Activated CD4-positive, alpha-beta T cell treated with anti-CD3 and anti-CD28 coated beads for 36 hours (primary cell): ENCODE measurements at regions of chr15 and their contacts with region 1.

Region 1: GRCh38 chr15:73991726-73992593 is at the start of gene STOML1:
- DNase-seq: peak; percentile 96
- ATAC-seq: peak; percentile 74
- H3K4me3 Mint-ChIP-seq: peak within 1 kb of the TSS; percentile 74
- H3K27ac Mint-ChIP-seq: peak within 1 kb of the TSS; percentile 86
- H3K4me1 Mint-ChIP-seq: peaks cover 42% of the 10 kb centered on the region
- H3K27me3 Mint-ChIP-seq: no peaks in the 10 kb centered on the region
- total RNA-seq, gene STOML1: 6.3 to 7.1 TPM

Region 2: GRCh38 chr15:72272213-72273002 is 1719.6 kb before region 1 on chr15 and contains the start of gene PARP6:
- CTCF ChIA-PET with region 1: no interaction called
- POLR2A ChIA-PET with region 1: no interaction called
- intact Hi-C with region 1: loop called in 1 of 2 experiments (anchors 10 kb)
- DNase-seq: peak; percentile 99
- ATAC-seq: peak; percentile 98
- H3K4me3 Mint-ChIP-seq: peak within 1 kb of the TSS; percentile 80
- H3K27ac Mint-ChIP-seq: peak within 1 kb of the TSS; percentile 92
- H3K4me1 Mint-ChIP-seq: peaks cover 35% of the 10 kb centered on the region
- H3K27me3 Mint-ChIP-seq: no peaks in the 10 kb centered on the region
- total RNA-seq, gene PARP6: 41.4 to 58.2 TPM

Region 3: GRCh38 chr15:73927476-73928240 is 64.3 kb before region 1 on chr15:
- CTCF ChIA-PET with region 1: interaction called, 4 read pairs
- POLR2A ChIA-PET with region 1: no interaction called
- intact Hi-C with region 1: loop called in 1 of 2 experiments (anchors 2 kb)
- DNase-seq: peak; percentile 87
- ATAC-seq: peak; percentile 77
- H3K4me3 Mint-ChIP-seq: peak overlapping the region; percentile 72
- H3K27ac Mint-ChIP-seq: peak overlapping the region; percentile 42
- H3K4me1 Mint-ChIP-seq: peaks cover 35% of the 10 kb centered on the region
- H3K27me3 Mint-ChIP-seq: no peaks in the 10 kb centered on the region

Region 4: GRCh38 chr15:73972984-73973682 is 18.8 kb before region 1 on chr15:
- CTCF ChIA-PET with region 1: interaction called, 57 read pairs
- POLR2A ChIA-PET with region 1: interaction called, 3 read pairs
- intact Hi-C with region 1: loop called in 1 of 2 experiments (anchors 1 kb)
- DNase-seq: peak; percentile 91
- ATAC-seq: peak; percentile 88
- H3K4me3 Mint-ChIP-seq: peak overlapping the region; percentile 8
- H3K27ac Mint-ChIP-seq: no peak overlapping the region
- H3K4me1 Mint-ChIP-seq: peaks cover 27% of the 10 kb centered on the region
- H3K27me3 Mint-ChIP-seq: peaks cover 12% of the 10 kb centered on the region

Region 5: GRCh38 chr15:74053941-74054529 is 62.1 kb after region 1 on chr15:
- CTCF ChIA-PET with region 1: interaction called, 19 read pairs
- POLR2A ChIA-PET with region 1: no interaction called
- intact Hi-C with region 1: no loop called
- DNase-seq: peak; percentile 88
- ATAC-seq: peak; percentile 99
- H3K4me3 Mint-ChIP-seq: no peak overlapping the region
- H3K27ac Mint-ChIP-seq: no peak overlapping the region
- H3K4me1 Mint-ChIP-seq: peaks cover 8% of the 10 kb centered on the region
- H3K27me3 Mint-ChIP-seq: no peaks in the 10 kb centered on the region

Region 6: GRCh38 chr15:74695597-74696397 is 703.8 kb after region 1 on chr15 and contains the start of gene EDC3:
- CTCF ChIA-PET with region 1: no interaction called
- POLR2A ChIA-PET with region 1: no interaction called
- intact Hi-C with region 1: loop called in 1 of 2 experiments (anchors 10 kb)
- DNase-seq: peak; percentile 92
- ATAC-seq: peak; percentile 91
- H3K4me3 Mint-ChIP-seq: peak within 1 kb of the TSS; percentile 98
- H3K27ac Mint-ChIP-seq: peak within 1 kb of the TSS; percentile 99
- H3K4me1 Mint-ChIP-seq: peaks cover 27% of the 10 kb centered on the region
- H3K27me3 Mint-ChIP-seq: no peaks in the 10 kb centered on the region
- total RNA-seq, gene EDC3: 44.7 to 45.0 TPM

Region 7: DNA sequence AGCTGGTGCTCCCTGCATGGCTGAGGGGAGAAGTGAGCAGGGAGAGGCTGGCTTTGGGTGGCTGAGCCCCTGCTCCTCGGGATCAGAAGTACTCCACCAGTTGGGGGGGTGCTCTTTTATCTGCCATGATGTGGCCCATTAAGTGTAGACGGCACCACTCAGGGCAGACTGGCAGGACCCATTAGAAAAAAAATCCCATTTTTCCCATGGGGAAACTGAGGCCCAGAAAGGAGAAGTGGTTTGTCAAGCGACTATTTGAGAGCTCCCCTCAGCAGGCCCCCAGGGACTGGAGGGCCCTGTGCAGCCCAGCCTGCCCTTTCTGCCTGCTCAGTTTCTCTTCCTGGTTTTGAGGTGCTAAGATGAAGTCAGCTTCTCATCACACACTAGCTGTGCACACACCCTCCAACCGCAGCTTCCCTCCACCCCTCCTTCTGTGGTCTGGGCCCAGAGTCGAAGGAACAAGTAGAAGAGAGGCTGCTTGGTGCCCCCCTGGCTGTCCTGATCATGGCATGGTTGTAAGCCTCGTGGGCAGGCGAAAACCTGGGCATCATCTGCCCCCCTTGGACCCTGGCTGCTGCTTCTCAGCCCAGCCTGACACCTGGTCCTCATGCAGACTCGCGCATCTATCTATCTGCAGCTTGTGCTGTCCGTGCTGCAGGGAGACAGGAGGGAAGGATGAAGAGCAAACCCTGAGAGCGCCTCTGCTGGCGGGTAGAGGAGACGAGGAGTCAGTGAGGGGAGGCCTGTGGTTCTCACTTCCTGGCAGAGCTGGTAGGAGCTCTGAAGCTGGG is 795.5 kb after region 1 on chr15:
- CTCF ChIA-PET with region 1: interaction called, 4 read pairs
- POLR2A ChIA-PET with region 1: no interaction called
- intact Hi-C with region 1: loop called (anchors 5 to 10 kb)
- DNase-seq: peak; percentile 97
- ATAC-seq: peak; percentile 74
- H3K4me3 Mint-ChIP-seq: peak overlapping the region; percentile 89
- H3K27ac Mint-ChIP-seq: peak overlapping the region; percentile 100
- H3K4me1 Mint-ChIP-seq: peaks cover 58% of the 10 kb centered on the region
- H3K27me3 Mint-ChIP-seq: no peaks in the 10 kb centered on the region